Common myeloid progenitor, CD34-positive (primary cell): ENCODE measurements at regions of chr13 and their contacts with region 1.

Region 1: GRCh38 chr13:33228648-33229445 is 56.7 kb downstream of the STARD13 start:
- DNase-seq: peak; percentile 47 to 54 (median 50)
- H3K4me3 ChIP-seq: no peak overlapping the region
- H3K27ac ChIP-seq: no peak overlapping the region
- H3K4me1 ChIP-seq: peaks cover 0 to 5% (median under 1%) of the 10 kb centered on the region in 4 experiments
- H3K27me3 ChIP-seq: no peaks in the 10 kb centered on the region

Region 2: GRCh38 chr13:33146843-33147611 is 81.8 kb before region 1 on chr13:
- CTCF ChIA-PET with region 1: no interaction called
- POLR2A ChIA-PET with region 1: no interaction called
- DNase-seq: no peak
- H3K4me3 ChIP-seq: no peak overlapping the region
- H3K27ac ChIP-seq: no peak overlapping the region
- H3K4me1 ChIP-seq: no peaks in the 10 kb centered on the region
- H3K27me3 ChIP-seq: no peaks in the 10 kb centered on the region

Region 3: DNA sequence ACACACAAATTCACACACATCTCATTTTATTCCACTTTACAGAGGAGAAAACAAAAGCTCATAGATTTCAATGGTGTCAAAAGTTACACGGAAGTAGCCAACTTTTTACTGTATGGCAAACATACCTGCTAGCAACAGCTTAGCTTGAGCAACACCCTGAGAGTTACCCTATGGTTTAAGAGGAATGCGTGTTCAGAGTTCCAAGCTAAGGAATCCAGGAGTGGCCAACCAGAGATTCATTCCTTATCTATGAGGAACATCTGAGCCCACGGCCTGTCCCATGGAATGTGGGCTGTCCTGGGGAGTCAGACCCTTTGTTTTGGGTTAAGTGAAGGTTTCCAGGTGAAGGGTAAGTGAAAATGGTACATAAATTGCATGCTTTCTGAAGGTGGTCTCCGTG is 10.8 kb before region 1 on chr13:
- CTCF ChIA-PET with region 1: interaction called, 11 read pairs
- POLR2A ChIA-PET with region 1: no interaction called
- DNase-seq: no peak
- H3K4me3 ChIP-seq: no peak overlapping the region
- H3K27ac ChIP-seq: no peak overlapping the region
- H3K4me1 ChIP-seq: peaks cover 0 to 13% (median 0%) of the 10 kb centered on the region in 4 experiments
- H3K27me3 ChIP-seq: no peaks in the 10 kb centered on the region

Region 4: GRCh38 chr13:33723772-33724435 is 495.1 kb after region 1 on chr13:
- CTCF ChIA-PET with region 1: interaction called, 16 read pairs
- POLR2A ChIA-PET with region 1: no interaction called
- DNase-seq: peak; percentile 81 to 87 (median 87)
- H3K4me3 ChIP-seq: no peak overlapping the region
- H3K27ac ChIP-seq: no peak overlapping the region
- H3K4me1 ChIP-seq: peaks cover 5 to 26% (median 13%) of the 10 kb centered on the region in 4 experiments
- H3K27me3 ChIP-seq: no peaks in the 10 kb centered on the region